MCF 10A (cell line): ENCODE measurements at regions of chr16 and their contacts with region 1.

Region 1: DNA sequence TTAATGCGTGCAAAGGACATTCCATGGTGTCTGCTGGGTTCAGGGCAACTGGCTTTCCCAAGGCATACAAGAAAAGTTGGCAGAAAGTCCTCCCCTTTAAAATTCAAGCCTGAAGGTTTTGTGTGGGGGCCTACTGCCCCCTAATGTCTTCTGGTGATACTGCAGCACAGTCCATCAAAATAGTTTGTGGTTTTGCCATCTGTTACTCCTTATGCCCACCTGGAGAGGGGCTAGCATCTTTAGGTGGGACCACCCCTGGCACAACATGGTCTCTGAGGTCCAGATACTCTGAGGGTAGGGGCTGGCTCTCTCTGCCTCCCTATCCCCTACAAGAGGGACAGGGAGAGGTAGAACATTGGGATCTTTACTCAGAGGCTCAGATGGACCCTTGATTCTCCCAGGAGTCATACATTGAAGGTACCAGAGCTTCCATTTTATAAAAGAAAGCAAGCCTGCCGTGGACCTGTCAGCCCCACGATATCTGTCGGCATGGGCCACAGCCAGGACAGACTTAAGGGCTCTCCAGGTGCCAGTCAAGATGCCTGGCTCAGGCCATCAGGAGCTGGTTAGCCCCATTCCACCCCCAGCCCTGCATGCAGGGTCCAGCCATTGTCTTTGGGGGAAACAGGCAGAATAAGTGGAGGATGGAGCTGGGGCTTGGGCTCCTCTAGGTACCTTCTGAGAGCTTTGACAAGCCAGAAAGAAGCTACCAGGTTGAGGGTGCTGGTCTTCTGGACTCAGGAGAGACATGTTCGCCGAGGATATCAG is 6.3 kb downstream of the ESRP2 start:
- DNase-seq: peak; percentile 72
- H3K4me3 Mint-ChIP-seq: no peak overlapping the region
- H3K27ac Mint-ChIP-seq: no peak overlapping the region
- H3K4me1 Mint-ChIP-seq: peaks cover 13% of the 10 kb centered on the region
- H3K27me3 Mint-ChIP-seq: no peaks in the 10 kb centered on the region
- CTCF ChIP-seq: peak; percentile 87

Region 2: DNA sequence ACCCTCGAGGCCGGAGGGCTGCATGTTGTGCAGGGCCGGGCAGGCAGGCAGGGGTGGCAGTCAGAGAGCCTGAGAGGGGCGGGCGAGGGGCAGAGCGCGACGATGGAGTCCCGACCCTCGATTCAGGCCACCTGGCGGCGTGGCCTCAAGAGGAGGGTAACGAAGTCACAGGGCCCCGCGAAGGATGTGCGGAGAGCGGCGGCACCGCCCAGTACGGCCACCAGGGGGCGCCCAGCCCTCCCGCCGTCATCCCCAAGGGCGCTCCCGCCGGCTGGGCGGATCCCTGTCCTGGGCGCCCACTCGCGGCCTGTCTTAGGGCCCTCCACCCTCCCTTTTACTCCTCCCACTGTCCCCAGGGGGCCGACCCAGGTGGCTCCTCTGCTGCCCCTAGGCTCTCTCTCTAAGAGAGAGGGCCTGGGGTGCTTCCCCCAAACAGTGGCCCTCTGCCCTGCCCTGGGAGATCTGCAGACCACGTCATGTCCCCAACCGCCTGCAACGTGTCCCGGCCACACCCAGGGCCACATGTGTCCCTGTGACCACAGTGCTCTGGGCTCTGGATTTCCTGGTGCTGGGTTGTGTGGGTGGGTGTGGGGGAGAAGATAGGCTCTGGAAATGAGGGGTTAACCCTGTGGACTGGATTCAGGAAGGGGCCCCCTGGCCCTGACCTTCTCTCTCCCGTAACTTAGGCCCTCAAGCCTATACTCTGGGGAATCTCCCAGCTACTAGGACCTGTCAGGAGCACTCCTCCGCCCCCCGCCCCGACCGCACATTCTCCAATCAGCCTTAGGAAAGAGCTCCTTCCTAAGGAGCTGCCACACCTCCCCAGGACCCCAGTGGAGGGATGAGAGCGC is 236.2 kb before region 1 on chr16:
- CTCF ChIA-PET with region 1: no interaction called
- POLR2A ChIA-PET with region 1: no interaction called
- intact Hi-C with region 1: loop called (anchors 1 kb)
- DNase-seq: peak; percentile 62
- H3K4me3 Mint-ChIP-seq: peak overlapping the region; percentile 53
- H3K27ac Mint-ChIP-seq: peak overlapping the region; percentile 82
- H3K4me1 Mint-ChIP-seq: no peaks in the 10 kb centered on the region
- H3K27me3 Mint-ChIP-seq: no peaks in the 10 kb centered on the region
- CTCF ChIP-seq: peak; percentile 98

Region 3: GRCh38 chr16:68064791-68065365 is 164.7 kb before region 1 on chr16:
- CTCF ChIA-PET with region 1: interaction called, 4 read pairs
- POLR2A ChIA-PET with region 1: no interaction called
- intact Hi-C with region 1: loop called (anchors 2 kb)
- DNase-seq: peak; percentile 67
- H3K4me3 Mint-ChIP-seq: no peak overlapping the region
- H3K27ac Mint-ChIP-seq: no peak overlapping the region
- H3K4me1 Mint-ChIP-seq: peaks cover 11% of the 10 kb centered on the region
- H3K27me3 Mint-ChIP-seq: no peaks in the 10 kb centered on the region
- CTCF ChIP-seq: peak; percentile 62

Region 4: GRCh38 chr16:68074850-68075555 is 154.6 kb before region 1 on chr16:
- CTCF ChIA-PET with region 1: interaction called, 7 read pairs
- POLR2A ChIA-PET with region 1: interaction called, 25 read pairs
- intact Hi-C with region 1: loop called (anchors 1 kb)
- DNase-seq: no peak
- H3K4me3 Mint-ChIP-seq: no peak overlapping the region
- H3K27ac Mint-ChIP-seq: no peak overlapping the region
- H3K4me1 Mint-ChIP-seq: peaks cover 5% of the 10 kb centered on the region
- H3K27me3 Mint-ChIP-seq: no peaks in the 10 kb centered on the region
- CTCF ChIP-seq: no peak

Region 5: GRCh38 chr16:68093816-68094613 is 135.6 kb before region 1 on chr16:
- CTCF ChIA-PET with region 1: interaction called, 8 read pairs
- POLR2A ChIA-PET with region 1: interaction called, 99 read pairs
- intact Hi-C with region 1: loop called (anchors 1 kb)
- DNase-seq: peak; percentile 35
- H3K4me3 Mint-ChIP-seq: no peak overlapping the region
- H3K27ac Mint-ChIP-seq: peak overlapping the region; percentile 18
- H3K4me1 Mint-ChIP-seq: peaks cover 56% of the 10 kb centered on the region
- H3K27me3 Mint-ChIP-seq: no peaks in the 10 kb centered on the region
- CTCF ChIP-seq: peak; percentile 43

Region 6: DNA sequence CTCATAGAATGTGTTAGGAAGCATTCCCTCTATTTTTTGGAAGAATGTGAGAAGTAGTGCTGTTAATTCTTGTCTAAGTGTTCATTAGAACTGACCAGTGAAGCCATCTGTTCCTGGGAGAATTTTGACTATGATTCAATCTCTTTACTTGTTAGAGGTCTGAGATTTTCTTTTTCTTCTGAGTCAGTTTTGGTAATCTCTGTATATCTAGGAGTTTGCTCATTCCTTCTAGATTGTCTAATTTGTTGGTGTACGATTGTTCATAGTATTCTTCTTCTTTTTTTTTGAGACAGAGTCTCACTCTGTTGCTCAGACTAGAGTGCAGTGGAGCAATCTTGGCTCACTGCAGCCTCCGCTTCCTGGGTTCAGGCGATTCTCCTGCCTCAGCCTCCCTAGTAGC is 124.0 kb before region 1 on chr16:
- CTCF ChIA-PET with region 1: no interaction called
- POLR2A ChIA-PET with region 1: no interaction called
- intact Hi-C with region 1: no loop called
- DNase-seq: no peak
- H3K4me3 Mint-ChIP-seq: no peak overlapping the region
- H3K27ac Mint-ChIP-seq: no peak overlapping the region
- H3K4me1 Mint-ChIP-seq: peaks cover 9% of the 10 kb centered on the region
- H3K27me3 Mint-ChIP-seq: no peaks in the 10 kb centered on the region
- CTCF ChIP-seq: no peak